ENCODE measurements at regions of chr13 and their contacts with region 1.

Region 1: DNA sequence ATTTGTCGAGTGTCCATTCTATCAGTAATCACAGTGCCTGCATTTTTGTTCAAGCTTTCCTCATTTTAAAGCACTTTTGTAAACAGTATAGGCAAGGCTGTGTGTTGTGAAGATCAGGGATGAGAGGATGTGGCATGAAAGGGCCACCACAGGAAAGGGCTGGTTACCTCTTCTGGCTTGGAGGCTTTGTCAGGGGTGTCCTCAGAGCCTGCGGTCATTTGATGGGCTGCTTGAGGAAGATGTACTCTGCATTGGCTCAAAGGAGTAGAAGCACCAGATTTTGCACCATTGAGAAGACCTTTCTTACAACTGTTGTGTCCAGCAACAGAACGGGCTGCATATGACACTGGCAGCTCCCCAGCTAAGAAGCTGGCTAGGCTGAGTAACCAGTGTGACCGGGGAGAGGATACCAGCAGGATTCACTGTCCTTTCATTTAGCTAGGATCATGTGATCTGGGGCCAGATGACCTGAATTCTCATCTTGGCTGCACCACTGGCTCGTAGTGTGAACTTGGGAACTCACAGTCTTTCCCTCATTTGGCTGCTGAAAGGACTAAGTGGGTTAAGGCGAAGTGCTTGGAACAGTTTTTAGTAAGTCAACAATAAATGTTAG is 380.2 kb downstream of the FGF9 start:
- DNase-seq: no peak
- ATAC-seq: no peak
- H3K4me3 ChIP-seq: no peak overlapping the region
- H3K4me3 Mint-ChIP-seq: peak overlapping the region in 4 of 10 donors; percentile 12 to 64 (median 22)
- H3K27ac ChIP-seq: no peak overlapping the region
- H3K27ac Mint-ChIP-seq: peak overlapping the region in 3 of 9 donors; percentile 2 to 30 (median 10)
- H3K4me1 ChIP-seq: peaks cover 0 to 7% of the 10 kb centered on the region in 2 donors
- H3K4me1 Mint-ChIP-seq: peaks cover 10 to 41% (median 23%) of the 10 kb centered on the region in 7 donors
- H3K27me3 ChIP-seq: no peaks in the 10 kb centered on the region
- H3K27me3 Mint-ChIP-seq: no peaks in the 10 kb centered on the region

Region 2: DNA sequence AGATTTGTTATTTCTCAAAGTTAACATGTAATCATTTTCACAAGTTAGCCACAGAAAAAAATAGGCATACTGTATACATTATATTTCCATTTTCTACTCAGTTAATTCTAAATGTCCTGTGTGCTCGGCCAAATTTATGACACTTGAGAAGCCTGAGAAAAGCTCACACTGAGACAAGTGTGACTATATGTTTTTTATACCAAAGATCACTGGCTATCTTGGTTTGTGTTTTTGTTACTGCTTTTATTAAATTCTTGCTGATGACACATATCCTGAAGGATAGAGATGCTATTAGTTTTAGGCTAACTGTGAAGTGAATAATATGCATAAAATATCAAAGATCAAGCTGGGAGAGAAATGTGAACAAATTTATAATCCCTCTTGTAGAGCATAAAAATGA is 1396.9 kb before region 1 on chr13:
- CTCF ChIA-PET with region 1: no interaction called
- POLR2A ChIA-PET with region 1: no interaction called
- intact Hi-C with region 1: no loop called
- DNase-seq: no peak
- ATAC-seq: no peak
- H3K4me3 ChIP-seq: no peak overlapping the region
- H3K4me3 Mint-ChIP-seq: no peak overlapping the region
- H3K27ac ChIP-seq: no peak overlapping the region
- H3K27ac Mint-ChIP-seq: no peak overlapping the region
- H3K4me1 ChIP-seq: no peaks in the 10 kb centered on the region
- H3K4me1 Mint-ChIP-seq: peaks cover 0 to 4% (median 0%) of the 10 kb centered on the region in 7 donors
- H3K27me3 ChIP-seq: no peaks in the 10 kb centered on the region
- H3K27me3 Mint-ChIP-seq: no peaks in the 10 kb centered on the region

Region 3: DNA sequence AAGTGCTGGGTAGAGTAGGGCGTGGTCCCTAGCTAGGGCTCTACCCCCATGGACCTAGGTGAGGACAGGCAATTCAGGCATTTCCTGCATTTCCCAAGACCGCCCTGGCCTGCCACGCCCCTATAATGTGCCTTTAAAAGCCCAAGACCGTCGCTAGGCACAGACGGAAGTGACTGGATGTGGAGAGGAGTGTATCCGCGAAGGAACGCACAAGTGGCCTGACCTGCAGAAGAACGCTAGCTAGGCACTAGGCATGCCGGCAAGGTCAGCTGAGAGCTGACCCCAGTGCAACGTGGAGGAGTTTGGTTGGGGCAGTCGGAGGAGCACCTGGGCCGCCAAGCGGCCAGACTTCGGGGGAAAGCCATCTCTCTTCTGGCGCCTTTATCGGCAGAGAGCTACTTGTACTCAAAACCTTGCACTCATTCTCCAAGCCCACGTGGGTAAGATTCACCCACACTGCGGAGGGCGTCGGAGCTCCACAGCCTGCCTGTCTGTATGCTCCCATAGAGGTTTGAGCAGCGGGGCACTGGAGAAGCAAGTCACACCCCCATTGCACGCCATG is 10.2 kb before region 1 on chr13:
- CTCF ChIA-PET with region 1: no interaction called
- POLR2A ChIA-PET with region 1: interaction called, 4 read pairs
- intact Hi-C with region 1: loop called in 1 of 2 experiments (anchors 2 kb)
- DNase-seq: peak in 2 of 9 donors; percentile 13 to 16
- ATAC-seq: peak; percentile 65
- H3K4me3 ChIP-seq: no peak overlapping the region
- H3K4me3 Mint-ChIP-seq: peak overlapping the region; percentile 66 to 92 (median 80)
- H3K27ac ChIP-seq: no peak overlapping the region
- H3K27ac Mint-ChIP-seq: peak overlapping the region in 5 of 9 donors; percentile 28 to 92 (median 52)
- H3K4me1 ChIP-seq: no peaks in the 10 kb centered on the region
- H3K4me1 Mint-ChIP-seq: peaks cover 0 to 5% (median 2%) of the 10 kb centered on the region in 7 donors
- H3K27me3 ChIP-seq: no peaks in the 10 kb centered on the region
- H3K27me3 Mint-ChIP-seq: peaks cover 0 to 9% (median 0%) of the 10 kb centered on the region in 5 donors